ENCODE measurements at regions of chr9 and their contacts with region 1.

Region 1: DNA sequence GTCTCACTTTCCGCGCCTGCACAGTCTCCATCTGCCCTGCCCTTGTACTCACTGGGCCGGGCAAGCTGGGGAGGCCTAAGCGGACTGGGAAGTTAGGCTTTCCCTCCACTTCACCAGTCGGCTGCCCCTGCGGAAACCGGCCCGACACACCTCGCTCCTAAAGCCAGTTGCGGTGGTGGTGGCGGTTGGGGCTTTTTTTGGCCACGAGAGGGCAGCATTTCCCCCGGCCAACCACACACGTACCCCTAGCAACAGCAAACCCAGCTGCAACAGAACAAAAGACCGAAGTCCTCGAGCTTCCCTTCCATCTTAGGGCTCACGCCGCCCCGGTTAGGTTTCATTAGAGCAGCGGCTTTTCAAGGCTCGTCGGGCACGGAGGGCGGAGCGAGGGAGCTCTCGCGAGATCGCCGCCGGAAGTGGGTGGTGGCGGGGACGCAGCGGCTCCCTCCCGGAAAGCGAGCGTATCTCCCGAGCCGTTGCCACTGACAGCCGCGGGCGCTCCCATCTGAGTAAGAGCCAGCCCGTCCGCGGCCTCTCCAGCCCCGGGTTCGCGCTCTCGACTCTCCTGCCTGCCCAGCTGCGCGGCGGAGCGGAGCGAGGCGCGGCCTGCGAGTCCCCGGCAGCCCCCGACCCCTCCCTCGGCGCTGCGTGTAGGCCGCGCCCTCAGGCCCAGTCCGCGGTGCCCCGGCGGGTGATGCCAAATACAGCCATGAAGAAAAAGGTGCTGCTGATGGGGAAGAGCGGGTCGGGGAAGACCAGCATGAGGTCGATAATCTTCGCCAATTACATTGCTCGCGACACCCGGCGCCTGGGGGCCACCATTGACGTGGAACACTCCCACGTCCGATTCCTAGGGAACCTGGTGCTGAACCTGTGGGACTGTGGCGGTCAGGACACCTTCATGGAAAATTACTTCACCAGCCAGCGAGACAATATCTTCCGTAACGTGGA is at the start of gene RRAGA:
- DNase-seq: peak; percentile 94
- H3K4me3 Mint-ChIP-seq: peak within 1 kb of the TSS; percentile 96
- H3K27ac Mint-ChIP-seq: peak within 1 kb of the TSS; percentile 95
- H3K4me1 Mint-ChIP-seq: peaks cover 39% of the 10 kb centered on the region
- H3K27me3 Mint-ChIP-seq: no peaks in the 10 kb centered on the region
- total RNA-seq, gene RRAGA: 60.8 and 64.6 TPM in 2 replicates

Region 2: DNA sequence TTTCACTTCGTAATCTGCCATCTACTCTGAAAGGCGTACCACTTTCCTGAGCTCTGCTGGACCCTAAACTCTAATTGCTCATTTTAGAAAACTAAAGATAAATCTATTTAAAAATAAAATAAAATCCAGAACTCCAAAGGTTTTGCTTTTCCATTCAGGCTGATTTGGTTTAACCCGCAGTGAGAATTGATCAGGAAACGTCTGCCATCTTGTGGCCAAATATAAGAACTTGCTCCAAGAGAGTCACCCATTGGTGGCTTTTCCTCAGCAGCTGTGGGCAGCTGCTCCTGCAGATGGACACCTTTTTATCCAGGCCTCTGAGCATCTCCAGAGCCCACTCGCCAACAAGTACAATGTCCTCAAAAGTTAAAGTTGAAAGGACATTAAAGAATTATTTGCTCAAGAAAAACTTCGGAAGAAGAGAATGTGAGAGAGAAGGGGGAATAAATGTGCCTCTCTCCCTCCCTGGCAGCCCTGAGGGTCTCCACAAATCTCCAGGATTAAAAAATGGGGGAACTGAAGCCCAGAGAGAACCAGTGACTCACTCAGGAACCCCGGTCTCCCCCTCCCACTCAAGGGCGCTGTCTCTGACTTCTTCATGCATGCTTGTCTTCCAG is 20.3 kb before region 1 on chr9:
- intact Hi-C with region 1: no loop called
- DNase-seq: no peak
- H3K4me3 Mint-ChIP-seq: no peak overlapping the region
- H3K27ac Mint-ChIP-seq: no peak overlapping the region
- H3K4me1 Mint-ChIP-seq: peaks cover 10% of the 10 kb centered on the region
- H3K27me3 Mint-ChIP-seq: peaks cover 15% of the 10 kb centered on the region

Region 3: GRCh38 chr9:19127881-19128500 is 78.8 kb after region 1 on chr9:
- intact Hi-C with region 1: loop called (anchors 2 kb)
- DNase-seq: peak; percentile 26
- H3K4me3 Mint-ChIP-seq: peak overlapping the region; percentile 88
- H3K27ac Mint-ChIP-seq: peak overlapping the region; percentile 94
- H3K4me1 Mint-ChIP-seq: peaks cover 53% of the 10 kb centered on the region
- H3K27me3 Mint-ChIP-seq: no peaks in the 10 kb centered on the region

Region 4: GRCh38 chr9:19161257-19162025 is 112.2 kb after region 1 on chr9:
- intact Hi-C with region 1: loop called (anchors 1 kb)
- DNase-seq: peak; percentile 56
- H3K4me3 Mint-ChIP-seq: peak overlapping the region; percentile 33
- H3K27ac Mint-ChIP-seq: peak overlapping the region; percentile 89
- H3K4me1 Mint-ChIP-seq: peaks cover 16% of the 10 kb centered on the region
- H3K27me3 Mint-ChIP-seq: no peaks in the 10 kb centered on the region

Region 5: DNA sequence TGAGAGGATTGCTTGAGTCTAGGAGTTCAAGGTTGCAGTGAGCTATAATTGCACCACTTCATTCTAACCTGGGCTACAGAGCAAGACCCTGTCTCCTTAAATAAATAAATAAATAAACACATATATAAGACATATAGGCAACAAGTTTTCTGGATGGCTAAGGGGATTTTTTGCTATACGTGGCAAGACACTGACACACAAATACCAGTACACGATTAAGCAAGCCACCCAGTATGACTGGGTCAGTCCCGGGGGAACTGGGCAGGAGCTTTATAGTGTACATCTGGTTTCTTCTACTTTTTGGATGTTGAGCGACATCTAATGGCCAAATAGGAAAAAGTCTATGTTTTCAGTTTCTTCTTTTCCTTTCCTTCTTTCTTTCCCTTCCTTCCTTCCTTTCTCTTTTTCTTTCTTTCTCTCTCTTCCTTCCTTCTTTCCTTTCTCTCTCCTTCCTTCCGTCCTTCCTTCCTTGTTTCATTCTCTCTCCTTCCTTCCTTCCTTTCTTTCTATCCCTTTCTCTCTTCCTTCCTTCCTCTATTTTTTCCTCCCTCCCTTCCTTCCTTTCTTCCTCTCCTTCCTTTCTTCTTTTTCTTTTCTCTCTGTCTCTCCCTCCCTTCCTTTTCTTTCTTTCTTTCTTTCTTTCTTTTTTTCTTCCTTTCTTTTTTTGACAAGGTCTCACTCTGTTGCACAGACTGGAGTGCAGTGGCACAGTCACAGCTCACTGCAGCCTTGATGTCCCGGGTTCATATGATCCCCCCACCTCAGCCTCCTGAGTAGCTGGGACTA is 125.1 kb after region 1 on chr9:
- intact Hi-C with region 1: loop called (anchors 1 kb)
- DNase-seq: peak; percentile 21
- H3K4me3 Mint-ChIP-seq: peak overlapping the region; percentile 9
- H3K27ac Mint-ChIP-seq: peak overlapping the region; percentile 46
- H3K4me1 Mint-ChIP-seq: peaks cover 29% of the 10 kb centered on the region
- H3K27me3 Mint-ChIP-seq: no peaks in the 10 kb centered on the region

Region 6: DNA sequence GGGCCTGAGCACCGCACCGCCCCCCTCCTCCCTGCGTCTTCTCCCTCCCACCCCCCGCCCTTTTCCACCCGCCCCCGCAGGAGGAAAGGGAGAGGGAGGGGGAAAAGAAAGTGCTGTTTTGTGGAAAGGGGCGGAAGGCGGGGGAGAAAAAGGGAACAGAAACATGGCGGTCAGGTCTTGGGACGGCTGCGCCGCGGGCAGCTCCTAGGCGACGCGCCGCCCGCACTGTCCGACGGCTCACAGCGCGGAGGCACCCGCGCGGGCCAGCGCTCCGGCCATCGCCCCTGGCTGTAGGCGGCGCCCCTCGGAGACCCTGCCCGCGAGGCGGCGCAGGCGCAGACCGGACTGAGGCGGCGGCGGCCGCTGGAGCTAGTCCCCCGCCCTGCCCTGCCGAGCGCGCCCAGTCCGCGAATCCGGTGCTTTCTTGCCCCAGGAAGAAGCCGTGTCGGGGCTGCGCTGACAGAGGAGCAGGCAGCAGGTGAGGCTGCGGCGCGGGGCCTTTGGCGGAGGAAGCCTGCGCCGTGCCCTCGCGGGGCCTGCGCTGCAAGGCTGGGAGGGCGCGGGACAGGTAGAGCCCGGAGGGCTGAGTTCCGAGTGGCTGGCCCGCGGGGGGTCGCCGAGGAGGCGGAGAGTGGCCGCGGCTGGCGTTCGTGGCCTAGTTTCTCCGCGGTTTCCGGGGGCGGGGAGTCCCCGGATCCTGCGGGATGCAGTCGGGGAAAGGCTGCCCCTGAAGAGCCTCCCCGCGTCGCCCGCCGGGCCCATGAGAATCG is 181.3 kb after region 1 on chr9 and contains the start of gene DENND4C:
- intact Hi-C with region 1: loop called (anchors 2 kb)
- DNase-seq: peak; percentile 82
- H3K4me3 Mint-ChIP-seq: peak within 1 kb of the TSS; percentile 76
- H3K27ac Mint-ChIP-seq: peak within 1 kb of the TSS; percentile 69
- H3K4me1 Mint-ChIP-seq: peaks cover 12% of the 10 kb centered on the region
- H3K27me3 Mint-ChIP-seq: no peaks in the 10 kb centered on the region
- total RNA-seq, gene DENND4C: 19.0 and 25.0 TPM in 2 replicates

Region 7: DNA sequence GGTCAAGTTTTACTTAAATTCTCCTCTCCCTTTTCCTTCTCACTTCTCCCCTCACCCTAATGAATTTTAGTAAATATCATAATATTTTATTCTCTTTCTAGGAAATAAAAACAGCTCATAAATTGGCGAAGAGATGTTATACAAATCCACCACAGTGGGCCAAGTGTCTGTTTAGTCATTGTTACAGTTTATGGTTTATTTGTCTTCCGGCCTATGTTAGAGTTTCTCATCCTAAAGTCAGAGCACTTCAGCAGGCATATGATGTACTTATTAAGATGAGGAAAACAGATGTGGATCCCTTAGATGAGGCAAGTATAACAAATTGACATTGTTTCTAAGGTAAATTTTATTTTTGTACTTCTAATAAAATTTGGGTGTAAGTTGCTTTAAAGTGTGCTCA is 282.6 kb after region 1 on chr9:
- intact Hi-C with region 1: no loop called
- DNase-seq: no peak
- H3K4me3 Mint-ChIP-seq: no peak overlapping the region
- H3K27ac Mint-ChIP-seq: no peak overlapping the region
- H3K4me1 Mint-ChIP-seq: no peaks in the 10 kb centered on the region
- H3K27me3 Mint-ChIP-seq: no peaks in the 10 kb centered on the region

Region 8: GRCh38 chr9:19379697-19380046 is 330.4 kb after region 1 on chr9:
- intact Hi-C with region 1: loop called (anchors 1 kb)
- DNase-seq: no peak
- H3K4me3 Mint-ChIP-seq: peak overlapping the region; percentile 96
- H3K27ac Mint-ChIP-seq: peak overlapping the region; percentile 98
- H3K4me1 Mint-ChIP-seq: peaks cover 38% of the 10 kb centered on the region
- H3K27me3 Mint-ChIP-seq: no peaks in the 10 kb centered on the region

Region 9: GRCh38 chr9:19408693-19409400 is 359.6 kb after region 1 on chr9 and contains the start of gene ACER2:
- intact Hi-C with region 1: loop called (anchors 1 kb)
- DNase-seq: peak; percentile 93
- H3K4me3 Mint-ChIP-seq: peak within 1 kb of the TSS; percentile 96
- H3K27ac Mint-ChIP-seq: peak within 1 kb of the TSS; percentile 50
- H3K4me1 Mint-ChIP-seq: peaks cover 14% of the 10 kb centered on the region
- H3K27me3 Mint-ChIP-seq: peaks cover 3% of the 10 kb centered on the region
- total RNA-seq, gene ACER2: 1.0 and 1.3 TPM in 2 replicates